HepG2 (cell line): ENCODE measurements at regions of chr5 and their contacts with region 1.

Region 1: GRCh38 chr5:56900858-56901578 is 8.4 kb upstream of the SETD9 start:
- DNase-seq: peak; percentile 56
- ATAC-seq: peak; percentile 83
- H3K4me3 ChIP-seq: no peak overlapping the region
- H3K27ac ChIP-seq: no peak overlapping the region
- H3K4me1 ChIP-seq: no peaks in the 10 kb centered on the region; the same call in 1 of the 2 replicates
- H3K27me3 ChIP-seq: no peaks in the 10 kb centered on the region
- CTCF ChIP-seq: peak; percentile 79
- EP300 ChIP-seq: no peak
- POLR2A ChIP-seq: no peak
- RAD21 ChIP-seq: peak; percentile 77

Region 2: DNA sequence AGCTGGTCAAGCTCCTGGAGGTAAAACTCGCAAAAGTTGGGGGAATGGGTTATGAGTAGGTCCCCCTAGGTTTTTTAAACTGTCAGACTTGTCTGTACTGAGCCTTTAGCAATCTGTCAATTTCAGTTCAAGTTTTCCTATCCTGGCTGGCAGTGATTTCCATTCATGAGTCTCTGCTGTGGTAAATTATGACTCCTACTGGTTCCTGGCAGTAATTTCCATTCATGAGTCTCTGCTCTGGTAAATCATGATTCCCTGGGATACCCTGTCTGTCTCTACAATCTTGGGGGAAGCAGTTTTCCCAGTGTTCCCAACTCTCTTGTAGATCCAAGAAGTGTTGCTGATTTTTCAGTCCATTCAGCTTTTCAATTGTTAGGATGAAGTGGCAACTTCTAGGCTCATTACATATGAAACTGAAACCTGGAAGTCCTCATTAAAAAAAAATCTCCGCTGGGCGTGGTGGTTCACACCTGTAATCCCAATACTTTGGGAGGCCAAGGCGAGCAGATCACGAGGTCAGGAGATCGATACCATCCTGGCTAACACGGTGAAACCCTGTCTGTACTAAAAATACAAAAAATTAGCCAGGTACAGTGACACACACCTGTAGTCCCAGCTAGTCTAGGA is 181.5 kb after region 1 on chr5:
- CTCF ChIA-PET with region 1: interaction called, 4 read pairs
- POLR2A ChIA-PET with region 1: no interaction called
- in situ Hi-C with region 1: no loop called
- intact Hi-C with region 1: loop called (anchors 1 kb)
- DNase-seq: peak; percentile 51
- ATAC-seq: peak; percentile 77
- H3K4me3 ChIP-seq: no peak overlapping the region
- H3K27ac ChIP-seq: no peak overlapping the region
- H3K4me1 ChIP-seq: no peaks in the 10 kb centered on the region
- H3K27me3 ChIP-seq: no peaks in the 10 kb centered on the region
- CTCF ChIP-seq: peak; percentile 66
- EP300 ChIP-seq: no peak
- POLR2A ChIP-seq: no peak
- RAD21 ChIP-seq: peak; percentile 38; the same call in 1 of the 2 replicates